ENCODE measurements at regions of chr17 and their contacts with region 1.

Region 1: DNA sequence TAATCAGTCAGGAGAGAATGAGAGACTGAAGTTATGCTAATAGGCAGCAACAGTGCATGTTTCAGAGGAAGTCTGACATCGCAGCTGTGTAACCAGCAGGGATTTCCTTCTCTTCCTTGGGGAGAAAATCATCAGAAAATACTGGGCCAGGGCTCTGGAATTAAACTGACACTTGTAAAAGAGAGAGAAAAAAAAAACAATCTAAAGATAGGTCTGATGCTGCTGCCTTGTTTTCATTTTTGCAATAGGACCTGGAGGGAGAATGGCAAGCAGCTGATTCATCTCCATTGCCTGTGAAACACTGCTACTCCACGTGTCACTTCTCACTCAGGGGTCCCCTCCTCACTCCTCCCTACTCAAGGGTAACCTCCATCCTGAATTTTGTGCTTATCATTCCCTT is 17.7 kb upstream of the CORO6 start:
- DNase-seq: no peak
- ATAC-seq: no peak
- H3K4me3 ChIP-seq: no peak overlapping the region
- H3K4me3 Mint-ChIP-seq: no peak overlapping the region
- H3K27ac ChIP-seq: peak overlapping the region in 1 of 2 donors; percentile 64
- H3K27ac Mint-ChIP-seq: peak overlapping the region; percentile 65
- H3K4me1 ChIP-seq: peaks cover 15 to 19% of the 10 kb centered on the region in 2 donors
- H3K4me1 Mint-ChIP-seq: peaks cover 32% of the 10 kb centered on the region
- H3K27me3 ChIP-seq: no peaks in the 10 kb centered on the region
- H3K27me3 Mint-ChIP-seq: no peaks in the 10 kb centered on the region
- CTCF ChIP-seq: no peak

Region 2: DNA sequence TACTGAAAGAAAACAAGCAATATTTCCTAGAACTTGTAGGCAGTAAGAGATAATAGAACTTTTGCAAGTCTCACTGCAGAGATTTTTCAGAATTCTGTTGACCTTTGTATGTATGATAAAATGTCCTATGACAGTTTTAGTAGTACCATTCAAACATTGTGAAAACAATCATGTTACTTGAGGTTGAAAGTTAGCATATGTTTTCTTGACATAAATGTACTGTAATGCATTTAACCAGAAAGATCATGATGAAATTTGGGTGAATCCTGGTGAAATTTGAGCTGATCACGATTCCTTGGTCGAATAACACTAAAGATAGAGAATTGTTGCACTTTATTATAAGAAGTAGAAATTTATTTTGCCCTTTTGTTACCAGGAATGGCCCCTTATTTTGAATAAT is 164.5 kb before region 1 on chr17:
- CTCF ChIA-PET with region 1: no interaction called
- POLR2A ChIA-PET with region 1: no interaction called
- intact Hi-C with region 1: no loop called
- DNase-seq: no peak
- ATAC-seq: no peak
- H3K4me3 ChIP-seq: no peak overlapping the region
- H3K4me3 Mint-ChIP-seq: no peak overlapping the region
- H3K27ac ChIP-seq: no peak overlapping the region
- H3K27ac Mint-ChIP-seq: no peak overlapping the region
- H3K4me1 ChIP-seq: no peaks in the 10 kb centered on the region
- H3K4me1 Mint-ChIP-seq: no peaks in the 10 kb centered on the region
- H3K27me3 ChIP-seq: no peaks in the 10 kb centered on the region
- H3K27me3 Mint-ChIP-seq: no peaks in the 10 kb centered on the region
- CTCF ChIP-seq: no peak

Region 3: DNA sequence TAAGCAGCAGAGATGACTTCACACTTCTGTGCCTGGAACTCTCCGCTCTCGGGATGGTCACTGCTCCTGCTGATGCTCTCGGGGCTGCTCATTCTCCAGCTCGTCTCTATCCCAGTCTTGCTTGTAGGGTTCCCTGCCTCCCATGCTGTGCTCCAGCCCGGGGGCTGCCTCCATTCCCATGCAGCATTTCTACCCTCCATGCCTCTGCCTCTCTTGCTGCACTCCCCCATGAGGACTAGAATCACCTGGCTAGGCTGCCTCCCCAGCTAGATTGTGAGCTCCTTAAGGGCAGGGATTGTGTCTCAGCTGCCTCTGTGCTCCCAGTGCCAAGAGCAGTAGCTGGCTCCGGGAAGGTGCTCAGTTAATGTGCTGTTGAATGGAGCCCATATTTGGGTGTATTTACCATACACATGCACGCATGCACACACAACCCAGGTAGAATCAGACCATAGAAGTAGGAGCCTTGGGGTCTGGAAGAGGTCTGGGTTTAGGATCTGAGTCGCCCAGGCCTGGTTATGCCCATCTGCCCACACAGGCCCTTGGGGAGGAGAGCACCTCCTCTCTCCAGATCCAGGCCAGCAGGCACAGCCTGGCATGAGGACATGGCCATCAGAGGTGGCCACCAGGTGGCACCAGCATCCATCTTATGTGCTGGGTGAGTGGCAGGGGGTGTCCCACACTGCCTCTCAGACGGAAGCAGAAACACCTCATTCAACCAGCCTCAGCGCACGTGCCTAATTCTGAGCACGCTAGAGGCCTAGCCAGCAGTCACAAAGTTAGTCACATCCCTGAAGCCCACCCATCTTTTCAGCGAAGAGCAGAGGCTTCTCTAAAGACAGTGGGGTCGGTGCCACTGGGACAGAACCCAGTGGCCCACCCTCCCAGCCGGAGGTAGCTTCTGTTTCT is 60.3 kb before region 1 on chr17:
- CTCF ChIA-PET with region 1: interaction called, 5 read pairs
- POLR2A ChIA-PET with region 1: interaction called, 10 read pairs
- intact Hi-C with region 1: no loop called
- DNase-seq: peak; percentile 93
- ATAC-seq: peak; percentile 96
- H3K4me3 ChIP-seq: no peak overlapping the region
- H3K4me3 Mint-ChIP-seq: no peak overlapping the region
- H3K27ac ChIP-seq: no peak overlapping the region
- H3K27ac Mint-ChIP-seq: peak overlapping the region; percentile 87
- H3K4me1 ChIP-seq: peaks cover 19 to 23% of the 10 kb centered on the region in 2 donors
- H3K4me1 Mint-ChIP-seq: peaks cover 27% of the 10 kb centered on the region
- H3K27me3 ChIP-seq: no peaks in the 10 kb centered on the region
- H3K27me3 Mint-ChIP-seq: no peaks in the 10 kb centered on the region
- CTCF ChIP-seq: peak; percentile 79

Region 4: DNA sequence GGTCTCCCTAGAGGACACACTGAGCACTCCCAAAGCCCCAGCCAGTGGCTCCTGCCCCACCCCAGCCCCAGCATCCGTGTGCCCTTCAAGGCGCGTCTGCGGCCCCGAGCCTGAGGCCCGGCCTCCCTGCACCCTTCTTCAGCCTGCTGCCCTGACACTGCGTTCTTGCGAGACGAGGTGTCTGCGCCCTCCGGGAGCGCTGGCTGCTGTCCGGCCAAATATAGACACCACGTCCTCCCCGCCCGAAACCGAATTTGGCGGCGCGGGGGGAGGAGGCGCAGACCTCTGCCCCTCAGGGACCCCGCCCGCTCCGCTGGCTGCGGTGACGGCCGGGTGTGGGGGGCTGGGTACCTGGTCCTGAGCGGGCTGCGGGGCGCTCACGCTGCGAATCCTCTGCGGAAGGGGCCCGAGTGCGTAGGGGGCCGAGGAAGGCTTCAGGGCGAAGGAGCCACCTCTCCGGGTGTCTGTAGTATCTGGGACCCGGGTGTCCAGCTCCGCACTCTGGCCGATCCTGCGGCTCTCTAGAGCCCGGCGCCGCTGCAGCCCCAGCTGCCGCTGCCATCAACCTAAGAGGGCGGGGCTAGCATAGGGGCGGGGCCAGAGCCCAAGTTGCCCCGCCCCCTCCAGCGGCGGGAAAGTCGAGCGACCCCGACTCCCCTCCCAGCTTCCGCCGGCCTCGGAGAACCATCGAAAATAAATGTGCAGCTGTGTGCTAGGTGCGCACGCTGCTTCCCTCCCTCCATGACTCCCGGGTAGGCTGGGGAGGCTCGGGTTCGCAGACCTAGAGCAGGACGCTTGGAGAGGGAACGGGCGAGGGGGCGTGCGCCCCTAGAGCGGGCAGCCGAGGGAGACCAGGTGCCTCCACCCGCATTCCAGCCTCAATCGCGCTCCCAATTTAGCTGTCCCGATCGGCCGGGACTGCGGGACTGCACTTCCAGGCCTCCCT is 17.8 kb before region 1 on chr17 and contains the start of gene CORO6:
- CTCF ChIA-PET with region 1: interaction called, 42 read pairs
- POLR2A ChIA-PET with region 1: interaction called, 5 read pairs
- intact Hi-C with region 1: loop called (anchors 2 kb)
- DNase-seq: peak; percentile 79
- ATAC-seq: peak; percentile 71
- H3K4me3 ChIP-seq: peak within 1 kb of the TSS; percentile 13 to 73 (median 62)
- H3K4me3 Mint-ChIP-seq: peak within 1 kb of the TSS; percentile 84
- H3K27ac ChIP-seq: no peak within 1 kb of the TSS
- H3K27ac Mint-ChIP-seq: peak within 1 kb of the TSS; percentile 55
- H3K4me1 ChIP-seq: peaks cover 18 to 25% of the 10 kb centered on the region in 2 donors
- H3K4me1 Mint-ChIP-seq: peaks cover 36% of the 10 kb centered on the region
- H3K27me3 ChIP-seq: peaks cover 0 to 6% (median 0%) of the 10 kb centered on the region in 4 experiments
- H3K27me3 Mint-ChIP-seq: no peaks in the 10 kb centered on the region
- CTCF ChIP-seq: no peak
- total RNA-seq, gene CORO6: 4.0 TPM in 2 replicates

Region 5: GRCh38 chr17:29682054-29682453 is 41.6 kb after region 1 on chr17:
- CTCF ChIA-PET with region 1: interaction called, 11 read pairs
- POLR2A ChIA-PET with region 1: no interaction called
- intact Hi-C with region 1: no loop called
- DNase-seq: peak; percentile 76
- ATAC-seq: peak; percentile 86
- H3K4me3 ChIP-seq: no peak overlapping the region
- H3K4me3 Mint-ChIP-seq: peak overlapping the region; percentile 11
- H3K27ac ChIP-seq: peak overlapping the region in 1 of 2 donors; percentile 58
- H3K27ac Mint-ChIP-seq: peak overlapping the region; percentile 38
- H3K4me1 ChIP-seq: peaks cover 15 to 16% of the 10 kb centered on the region in 2 donors
- H3K4me1 Mint-ChIP-seq: peaks cover 28% of the 10 kb centered on the region
- H3K27me3 ChIP-seq: no peaks in the 10 kb centered on the region
- H3K27me3 Mint-ChIP-seq: no peaks in the 10 kb centered on the region
- CTCF ChIP-seq: peak; percentile 63

Region 6: DNA sequence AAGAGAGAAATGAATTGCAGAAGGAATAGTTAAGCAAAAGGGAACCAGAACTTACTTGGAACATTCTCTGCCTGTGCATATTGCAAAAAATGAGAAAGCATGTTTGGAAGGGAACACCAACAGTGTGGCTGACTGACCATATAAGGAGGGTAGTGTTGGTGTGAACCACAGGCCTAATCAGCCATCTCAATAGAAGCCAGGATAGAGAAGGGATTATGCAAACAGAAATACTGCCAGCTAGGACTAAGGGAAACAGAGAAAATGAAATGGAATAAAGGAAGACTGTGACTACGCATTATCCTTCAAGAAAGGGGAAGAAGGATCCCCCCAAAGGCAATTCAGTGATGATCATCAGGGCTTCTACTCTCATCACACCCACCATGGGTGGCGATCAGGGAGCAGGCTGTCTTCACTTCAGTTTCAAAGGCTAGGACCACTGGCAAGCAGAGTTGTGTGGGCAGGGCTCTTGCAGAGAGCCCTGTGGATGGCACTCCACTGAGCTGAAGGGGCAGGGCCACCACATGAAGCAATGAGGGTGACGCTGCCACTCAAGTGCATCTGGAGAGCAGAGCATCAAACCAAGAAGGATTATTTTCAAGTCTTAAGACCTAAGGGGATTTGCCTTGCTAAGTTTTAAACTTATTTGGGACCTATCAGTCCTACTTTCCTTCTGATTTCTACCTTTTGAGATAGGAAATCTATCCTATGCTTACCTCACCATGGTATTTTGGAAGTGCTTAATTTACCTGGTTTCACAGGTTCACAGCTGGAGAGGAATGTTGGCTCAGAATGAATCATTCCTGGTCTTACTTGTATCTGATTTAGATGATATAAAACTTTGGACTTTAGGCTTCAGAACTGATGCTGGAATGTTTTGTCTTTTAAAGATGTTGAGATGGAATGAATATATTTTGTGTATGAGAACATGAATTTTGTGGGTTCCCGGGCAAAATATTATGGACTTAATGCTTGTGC is 149.1 kb after region 1 on chr17:
- CTCF ChIA-PET with region 1: interaction called, 14 read pairs
- POLR2A ChIA-PET with region 1: no interaction called
- intact Hi-C with region 1: no loop called
- DNase-seq: no peak
- ATAC-seq: no peak
- H3K4me3 ChIP-seq: no peak overlapping the region
- H3K4me3 Mint-ChIP-seq: no peak overlapping the region
- H3K27ac ChIP-seq: no peak overlapping the region
- H3K27ac Mint-ChIP-seq: no peak overlapping the region
- H3K4me1 ChIP-seq: peaks cover 3 to 8% of the 10 kb centered on the region in 2 donors
- H3K4me1 Mint-ChIP-seq: peaks cover 9% of the 10 kb centered on the region
- H3K27me3 ChIP-seq: no peaks in the 10 kb centered on the region
- H3K27me3 Mint-ChIP-seq: no peaks in the 10 kb centered on the region
- CTCF ChIP-seq: no peak

Region 7: DNA sequence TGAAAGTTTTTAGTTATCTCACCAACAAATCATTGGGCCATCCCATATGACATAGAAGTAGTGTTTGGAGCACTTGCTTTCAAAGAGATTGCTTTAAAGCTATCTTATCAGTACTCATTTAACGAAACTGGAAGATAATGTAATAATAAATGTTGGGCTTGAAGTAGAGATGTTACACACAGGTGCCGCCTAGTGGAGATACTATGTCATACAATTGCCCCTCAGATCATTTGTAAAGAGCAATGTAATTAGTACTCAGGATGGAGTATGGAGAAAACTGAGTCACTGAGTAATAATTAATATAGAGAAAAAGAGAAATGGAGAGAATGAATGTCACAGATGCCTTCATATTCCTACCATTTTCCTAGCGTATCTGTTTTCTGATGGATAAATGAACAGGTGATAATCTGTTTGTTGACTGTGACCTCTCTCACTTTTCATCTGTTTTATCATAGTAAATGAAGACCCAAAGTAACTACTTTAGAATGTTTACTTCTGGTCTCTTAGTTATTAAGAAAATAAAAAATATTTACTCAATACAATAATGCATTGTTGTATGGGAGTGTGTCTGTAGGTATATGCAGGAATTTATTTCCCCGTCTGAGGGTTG is 381.4 kb after region 1 on chr17:
- CTCF ChIA-PET with region 1: interaction called, 18 read pairs
- POLR2A ChIA-PET with region 1: no interaction called
- intact Hi-C with region 1: loop called (anchors 2 kb)
- DNase-seq: peak; percentile 69
- ATAC-seq: peak; percentile 75
- H3K4me3 ChIP-seq: no peak overlapping the region
- H3K4me3 Mint-ChIP-seq: no peak overlapping the region
- H3K27ac ChIP-seq: no peak overlapping the region
- H3K27ac Mint-ChIP-seq: no peak overlapping the region
- H3K4me1 ChIP-seq: no peaks in the 10 kb centered on the region
- H3K4me1 Mint-ChIP-seq: peaks cover 1% of the 10 kb centered on the region
- H3K27me3 ChIP-seq: no peaks in the 10 kb centered on the region
- H3K27me3 Mint-ChIP-seq: peaks cover 3% of the 10 kb centered on the region
- CTCF ChIP-seq: peak; percentile 91

Region 8: DNA sequence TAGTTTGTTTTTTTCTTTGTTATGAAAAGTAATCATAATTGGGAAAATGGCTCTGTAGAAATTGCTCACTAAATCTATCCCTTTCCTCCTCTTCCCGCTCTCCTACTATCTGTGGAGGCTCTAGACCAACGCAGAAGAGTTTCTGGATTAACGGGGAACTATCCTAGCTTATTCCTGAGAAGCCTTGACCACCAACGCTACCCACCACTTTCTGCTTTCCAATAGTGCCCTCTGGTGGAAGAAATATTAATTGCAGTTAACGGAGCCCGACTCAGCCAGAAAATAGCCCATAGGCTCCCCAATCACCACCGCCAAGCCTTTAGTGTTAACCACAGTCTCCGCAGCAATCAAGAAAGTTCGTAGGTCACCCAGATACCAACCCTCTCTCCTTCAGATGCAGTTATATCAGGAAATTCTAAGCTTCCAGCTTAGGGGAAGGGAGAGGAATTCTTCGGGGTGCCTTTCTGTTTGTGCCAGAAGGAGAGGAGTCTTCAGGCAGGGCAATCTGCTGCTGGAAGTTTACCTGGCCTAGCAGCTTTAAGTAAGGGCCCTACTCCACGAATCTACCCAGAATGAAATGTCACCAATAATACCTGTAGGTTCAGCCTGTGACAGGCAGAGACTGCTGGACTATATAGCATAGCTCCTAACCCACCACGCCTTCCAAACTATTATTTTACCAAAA is 453.2 kb after region 1 on chr17:
- CTCF ChIA-PET with region 1: interaction called, 5 read pairs
- POLR2A ChIA-PET with region 1: no interaction called
- intact Hi-C with region 1: loop called (anchors 5 kb)
- DNase-seq: peak; percentile 75
- ATAC-seq: peak; percentile 57
- H3K4me3 ChIP-seq: no peak overlapping the region
- H3K4me3 Mint-ChIP-seq: no peak overlapping the region
- H3K27ac ChIP-seq: no peak overlapping the region
- H3K27ac Mint-ChIP-seq: no peak overlapping the region
- H3K4me1 ChIP-seq: peaks cover 6 to 7% of the 10 kb centered on the region in 2 donors
- H3K4me1 Mint-ChIP-seq: peaks cover 12% of the 10 kb centered on the region
- H3K27me3 ChIP-seq: peaks cover 0 to 9% (median 8%) of the 10 kb centered on the region in 4 experiments
- H3K27me3 Mint-ChIP-seq: peaks cover 12% of the 10 kb centered on the region
- CTCF ChIP-seq: peak; percentile 90

Measured in B cell (primary cell).